ENCODE measurements at regions of chr1 and their contacts with region 1.

Region 1: GRCh38 chr1:223393275-223394241 is at the start of gene CCDC185:
- DNase-seq: no peak
- ATAC-seq: peak; percentile 56
- total RNA-seq, gene CCDC185: not detected

Region 2: DNA sequence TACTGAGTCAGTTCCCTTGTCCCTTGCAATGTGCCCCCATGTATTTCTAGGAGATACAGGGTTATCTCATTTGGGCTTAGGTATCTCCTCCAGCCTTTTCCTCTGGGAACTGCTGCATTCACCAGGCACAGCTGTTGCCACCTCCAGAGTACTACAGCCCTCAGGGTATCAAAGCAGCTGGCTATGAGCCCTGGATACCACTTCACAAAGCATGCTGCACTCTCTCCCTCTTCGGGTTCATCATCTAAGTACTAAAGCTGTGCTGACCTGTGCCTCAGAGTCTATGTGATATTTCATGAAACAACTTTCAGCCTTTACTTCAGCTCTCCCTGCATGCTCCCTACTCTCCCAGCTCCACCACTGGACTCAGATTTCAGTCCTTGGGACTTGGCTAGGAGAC is 61.9 kb after region 1 on chr1:
- intact Hi-C with region 1: loop called (anchors 10 kb)
- DNase-seq: no peak
- ATAC-seq: peak; percentile 51

Measured in Right ventricle myocardium superior (tissue), 1 donor.